ENCODE measurements at regions of chr2 and their contacts with region 1.

Region 1: DNA sequence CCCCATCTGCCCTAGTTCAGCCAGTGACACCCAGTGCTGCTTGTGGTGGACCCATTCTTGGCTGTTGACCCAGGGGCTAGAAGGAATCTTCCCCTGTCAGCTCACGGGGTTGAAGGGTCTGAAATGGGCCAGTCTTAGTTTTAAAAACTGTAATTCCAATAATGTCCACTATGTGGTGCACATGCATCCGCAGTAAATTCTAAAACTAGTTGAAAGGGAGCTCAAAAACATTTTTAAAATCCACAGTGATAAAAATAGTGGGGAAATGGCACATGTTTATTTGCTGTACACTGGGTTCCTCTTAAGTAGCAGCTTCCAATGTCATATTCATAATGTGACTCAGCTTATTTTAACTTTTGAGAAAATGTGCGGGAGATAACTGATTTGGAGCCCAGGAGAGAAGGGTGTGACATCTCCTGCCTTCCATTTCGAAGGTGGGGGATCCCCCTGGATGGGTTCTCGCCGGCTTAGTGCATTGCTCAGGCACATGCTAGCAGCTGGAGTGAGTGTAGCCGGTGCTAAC is 32.8 kb downstream of the GRHL1 start:
- DNase-seq: peak in 1 of 4 donors; percentile 53
- ATAC-seq: peak; percentile 84
- H3K4me3 ChIP-seq: no peak overlapping the region
- H3K27ac ChIP-seq: no peak overlapping the region
- H3K4me1 ChIP-seq: peaks cover 0 to 14% of the 10 kb centered on the region in 2 donors
- H3K27me3 ChIP-seq: peaks cover 0 to 13% of the 10 kb centered on the region in 2 donors
- CTCF ChIP-seq: peak; percentile 63 to 70

Region 2: GRCh38 chr2:9445089-9445488 is 539.2 kb before region 1 on chr2:
- intact Hi-C with region 1: no loop called
- DNase-seq: no peak
- ATAC-seq: no peak
- H3K4me3 ChIP-seq: no peak overlapping the region
- H3K27ac ChIP-seq: no peak overlapping the region
- H3K4me1 ChIP-seq: no peaks in the 10 kb centered on the region
- H3K27me3 ChIP-seq: no peaks in the 10 kb centered on the region
- CTCF ChIP-seq: no peak

Region 3: GRCh38 chr2:9799665-9800632 is 184.3 kb before region 1 on chr2:
- intact Hi-C with region 1: loop called in 1 of 2 experiments (anchors 10 kb)
- DNase-seq: peak; percentile 72 to 94 (median 86)
- ATAC-seq: peak; percentile 92
- H3K4me3 ChIP-seq: no peak overlapping the region
- H3K27ac ChIP-seq: peak overlapping the region in 1 of 2 donors; percentile 34
- H3K4me1 ChIP-seq: peaks cover 4 to 35% of the 10 kb centered on the region in 2 donors
- H3K27me3 ChIP-seq: no peaks in the 10 kb centered on the region
- CTCF ChIP-seq: peak; percentile 93 to 95

Measured in left lung (tissue), 14 donors.